Uterus (tissue), 4 donors: ENCODE measurements at regions of chr22 and their contacts with region 1.

Region 1: GRCh38 chr22:49936018-49936952 is 17.9 kb downstream of the CRELD2 start:
- DNase-seq: peak; percentile 95 to 96
- H3K4me3 ChIP-seq: peak overlapping the region; percentile 42 to 43
- H3K27ac ChIP-seq: peak overlapping the region; percentile 64 to 91
- H3K4me1 ChIP-seq: peaks cover 0 to 27% of the 10 kb centered on the region in 2 donors
- H3K27me3 ChIP-seq: no peaks in the 10 kb centered on the region
- CTCF ChIP-seq: no peak
- POLR2A ChIP-seq: peak in 1 of 2 donors; percentile 55

Region 2: GRCh38 chr22:49632199-49633009 is 303.9 kb before region 1 on chr22:
- intact Hi-C with region 1: no loop called
- DNase-seq: peak in 1 of 2 donors; percentile 61
- H3K4me3 ChIP-seq: peak overlapping the region in 1 of 2 donors; percentile 18
- H3K27ac ChIP-seq: no peak overlapping the region
- H3K4me1 ChIP-seq: no peaks in the 10 kb centered on the region
- H3K27me3 ChIP-seq: no peaks in the 10 kb centered on the region
- CTCF ChIP-seq: peak; percentile 55 to 78 (median 66)
- POLR2A ChIP-seq: no peak

Region 3: GRCh38 chr22:49970528-49971231 is 34.4 kb after region 1 on chr22:
- intact Hi-C with region 1: loop called (anchors 5 kb)
- DNase-seq: peak; percentile 92 to 96
- H3K4me3 ChIP-seq: peak overlapping the region; percentile 46 to 50
- H3K27ac ChIP-seq: peak overlapping the region; percentile 93 to 95
- H3K4me1 ChIP-seq: peaks cover 10 to 43% of the 10 kb centered on the region in 2 donors
- H3K27me3 ChIP-seq: no peaks in the 10 kb centered on the region
- CTCF ChIP-seq: no peak
- POLR2A ChIP-seq: peak; percentile 73 to 85